Left cardiac atrium (tissue), 4 donors: ENCODE measurements at regions of chr2 and their contacts with region 1.

Region 1: DNA sequence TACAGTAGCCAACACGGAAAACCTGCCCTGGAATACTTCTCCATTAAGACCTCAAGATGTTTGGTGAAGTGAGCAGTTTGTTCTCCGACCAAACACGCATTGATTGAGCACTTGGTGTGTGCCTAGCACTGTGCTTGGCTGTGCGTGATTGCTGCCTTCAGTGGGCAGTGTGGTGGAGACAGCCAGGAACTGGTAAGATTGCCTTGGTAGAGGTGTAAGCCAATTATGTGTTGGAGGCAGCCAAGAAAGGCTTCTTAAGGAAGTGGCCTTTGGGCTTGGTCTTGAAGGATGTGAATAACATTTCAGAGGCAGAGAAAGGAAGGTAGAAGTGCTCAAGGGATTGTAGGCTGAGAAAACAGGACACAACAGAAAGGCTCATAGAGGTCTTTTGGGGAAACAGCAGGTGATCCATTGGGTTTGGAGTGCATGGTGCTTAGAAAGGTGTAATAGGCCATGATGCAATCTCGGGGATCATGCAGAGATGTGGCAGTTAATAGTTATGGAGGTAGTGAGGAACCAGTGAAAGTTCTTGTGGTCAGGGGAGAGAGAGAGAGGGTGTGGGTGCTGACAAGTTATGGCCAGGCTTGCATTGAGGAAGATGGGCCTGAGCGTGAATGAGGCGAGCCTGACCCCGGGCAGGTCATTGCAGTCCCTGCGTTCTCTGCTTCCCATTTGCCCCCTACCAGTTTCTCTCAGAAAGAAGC is 6.3 kb downstream of the B3GNT2 start:
- DNase-seq: no peak
- ATAC-seq: no peak

Region 2: GRCh38 chr2:62084801-62085200 is 117.4 kb before region 1 on chr2:
- intact Hi-C with region 1: no loop called
- DNase-seq: no peak
- ATAC-seq: no peak

Region 3: DNA sequence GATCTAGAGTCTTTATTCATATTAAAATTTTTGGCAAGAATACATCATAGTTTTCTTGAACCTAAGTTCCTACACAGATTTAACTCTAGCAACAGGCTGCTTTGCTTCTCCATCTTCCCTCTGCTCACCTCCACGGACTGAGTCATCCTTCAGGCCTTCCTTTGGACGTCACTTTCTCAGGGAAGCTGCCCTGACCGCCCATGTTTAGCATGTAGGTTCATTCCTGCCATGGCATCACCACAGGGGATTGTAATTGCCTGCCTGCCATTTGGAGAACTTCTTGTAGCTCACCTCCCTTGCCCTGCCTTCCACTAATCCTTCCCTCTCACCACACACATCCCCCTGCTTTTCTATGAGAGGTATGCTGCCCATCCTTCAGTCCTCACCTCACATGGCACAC is 50.2 kb before region 1 on chr2:
- intact Hi-C with region 1: no loop called
- DNase-seq: no peak
- ATAC-seq: no peak

Region 4: GRCh38 chr2:62293490-62294271 is 91.5 kb after region 1 on chr2:
- intact Hi-C with region 1: loop called in 1 of 2 experiments (anchors 10 kb)
- DNase-seq: peak; percentile 53
- ATAC-seq: peak; percentile 66 to 79

Region 5: DNA sequence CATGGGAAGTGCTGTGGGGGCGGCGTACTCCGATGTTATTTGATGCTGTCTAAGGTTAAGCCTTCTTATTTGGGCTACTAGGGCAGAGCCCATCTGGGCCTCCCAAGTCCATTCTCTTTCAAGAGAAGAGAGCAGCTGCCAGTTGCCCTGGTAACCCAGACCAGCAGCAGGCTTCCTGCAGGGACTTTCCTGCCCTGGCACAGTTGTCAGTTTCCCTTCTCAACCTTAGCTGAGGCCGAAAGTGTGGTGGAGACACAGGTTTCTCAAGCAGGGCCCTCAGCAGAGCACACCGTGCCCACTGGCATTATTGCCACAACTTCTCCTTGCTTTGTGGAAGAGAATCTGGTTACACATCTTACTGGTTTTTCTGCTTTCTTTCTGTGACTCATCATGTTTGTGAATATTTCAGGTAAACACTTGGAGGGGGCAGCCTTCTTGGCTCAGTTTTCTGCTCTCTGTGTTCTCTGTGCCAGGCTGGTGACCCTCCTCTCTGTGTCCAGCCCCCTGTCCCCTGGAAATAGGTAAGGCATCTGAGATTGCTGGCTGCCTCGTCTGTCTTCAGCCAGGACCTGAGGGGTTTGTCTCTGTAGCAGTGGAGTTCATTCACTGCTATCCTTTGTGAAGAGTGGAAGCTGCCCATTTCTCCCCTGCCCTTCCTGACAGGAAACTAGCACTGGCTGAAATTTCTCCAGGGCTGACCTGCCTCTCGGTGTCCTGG is 104.7 kb after region 1 on chr2:
- intact Hi-C with region 1: loop called in 1 of 2 experiments (anchors 5 kb)
- DNase-seq: no peak
- ATAC-seq: peak in 1 of 2 donors; percentile 12